Right ventricle myocardium inferior (tissue), 1 donor: ENCODE measurements at regions of chr11 and their contacts with region 1.

Region 1: GRCh38 chr11:119728651-119729580 is at the start of gene NECTIN1:
- DNase-seq: peak; percentile 95
- ATAC-seq: peak; percentile 94
- total RNA-seq, gene NECTIN1: 20.0 TPM

Region 2: GRCh38 chr11:119832202-119832935 is 103.5 kb after region 1 on chr11:
- intact Hi-C with region 1: no loop called
- DNase-seq: no peak
- ATAC-seq: peak; percentile 48

Region 3: GRCh38 chr11:120108154-120108865 is 379.4 kb after region 1 on chr11:
- intact Hi-C with region 1: loop called (anchors 5 kb)
- DNase-seq: peak; percentile 74
- ATAC-seq: peak; percentile 76